H1 (cell line): ENCODE measurements at regions of chr17 and their contacts with region 1.

Region 1: GRCh38 chr17:35747540-35748017 is 5.5 kb downstream of the GAS2L2 start:
- DNase-seq: peak in 1 of 2 experiments; percentile 92
- H3K4me3 ChIP-seq: no peak overlapping the region
- H3K27ac ChIP-seq: no peak overlapping the region
- H3K4me1 ChIP-seq: peaks cover 0 to 11% (median 4%) of the 10 kb centered on the region in 4 experiments; a peak in 4 of 7 replicates
- H3K27me3 ChIP-seq: peaks cover 2 to 19% (median 15%) of the 10 kb centered on the region in 4 experiments
- CTCF ChIP-seq: peak; percentile 90 to 98 (median 95)
- EP300 ChIP-seq: no peak
- POLR2A ChIP-seq: no peak
- RAD21 ChIP-seq: peak; percentile 95 to 98

Region 2: GRCh38 chr17:35612924-35613521 is 134.6 kb before region 1 on chr17:
- CTCF ChIA-PET with region 1: interaction called, 166 read pairs
- POLR2A ChIA-PET with region 1: interaction called, 5 read pairs
- DNase-seq: peak in 1 of 2 experiments; percentile 55
- H3K4me3 ChIP-seq: no peak overlapping the region
- H3K27ac ChIP-seq: no peak overlapping the region
- H3K4me1 ChIP-seq: no peaks in the 10 kb centered on the region
- H3K27me3 ChIP-seq: no peaks in the 10 kb centered on the region
- CTCF ChIP-seq: peak in 2 of 3 experiments; percentile 50 to 69; a peak in 2 of 4 replicates
- EP300 ChIP-seq: no peak
- POLR2A ChIP-seq: no peak
- RAD21 ChIP-seq: peak; percentile 70

Region 3: GRCh38 chr17:35660902-35661301 is 86.7 kb before region 1 on chr17:
- CTCF ChIA-PET with region 1: interaction called, 18 read pairs
- POLR2A ChIA-PET with region 1: no interaction called
- DNase-seq: no peak
- H3K4me3 ChIP-seq: no peak overlapping the region
- H3K27ac ChIP-seq: no peak overlapping the region
- H3K4me1 ChIP-seq: peaks cover 0 to 3% (median 0%) of the 10 kb centered on the region in 4 experiments; a peak in 1 of 7 replicates
- H3K27me3 ChIP-seq: no peaks in the 10 kb centered on the region
- CTCF ChIP-seq: no peak
- EP300 ChIP-seq: no peak
- POLR2A ChIP-seq: no peak
- RAD21 ChIP-seq: peak in 1 of 2 experiments; percentile 16; a peak in 1 of 4 replicates

Region 4: DNA sequence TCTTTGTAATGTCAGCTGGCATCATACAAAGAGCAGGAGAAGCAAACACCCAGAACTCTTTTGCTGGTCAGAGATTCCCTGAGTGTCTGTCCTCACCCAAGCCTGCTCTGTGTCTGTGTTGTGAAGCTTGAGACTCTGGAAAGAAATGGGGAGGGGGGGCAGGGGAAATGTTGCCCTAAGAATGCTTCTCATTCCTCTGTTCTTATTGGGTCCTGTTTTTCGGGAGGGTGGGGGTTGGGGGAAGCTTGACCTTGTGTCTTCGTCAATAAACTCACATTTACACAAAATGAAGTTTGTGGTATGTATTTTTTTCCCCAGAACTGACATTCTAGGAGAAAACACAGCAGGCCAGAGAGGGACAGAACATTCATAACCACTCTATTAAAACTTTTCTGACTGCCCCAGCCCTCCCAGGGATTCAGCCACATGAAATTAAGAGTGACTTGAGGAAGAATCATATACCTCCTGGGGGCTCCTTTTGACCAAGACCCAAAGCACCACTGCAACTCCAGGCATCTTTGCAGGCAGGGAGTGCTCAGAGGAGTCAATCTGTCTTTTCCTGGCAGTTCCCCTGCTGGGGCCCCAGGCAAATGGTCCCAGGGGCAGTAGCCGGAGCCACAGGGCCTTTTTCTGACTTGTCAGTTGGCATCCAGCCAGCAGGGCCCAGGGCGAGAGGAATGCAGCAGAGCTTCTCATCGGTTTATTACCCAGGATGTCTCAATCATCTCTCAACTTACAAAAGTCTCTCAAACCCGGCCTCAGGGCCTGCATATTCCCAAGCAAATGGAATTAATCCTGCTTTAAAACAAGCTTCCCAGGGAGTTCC is 21.2 kb before region 1 on chr17:
- CTCF ChIA-PET with region 1: interaction called, 28 read pairs
- POLR2A ChIA-PET with region 1: interaction called, 3 read pairs
- DNase-seq: peak in 1 of 2 experiments; percentile 51
- H3K4me3 ChIP-seq: no peak overlapping the region
- H3K27ac ChIP-seq: no peak overlapping the region
- H3K4me1 ChIP-seq: peaks cover 3 to 22% (median 7%) of the 10 kb centered on the region in 4 experiments; a peak in 6 of 7 replicates
- H3K27me3 ChIP-seq: peaks cover 0 to 2% (median 1%) of the 10 kb centered on the region in 4 experiments; a peak in 3 of 7 replicates
- CTCF ChIP-seq: no peak
- EP300 ChIP-seq: no peak
- POLR2A ChIP-seq: no peak
- RAD21 ChIP-seq: no peak

Region 5: DNA sequence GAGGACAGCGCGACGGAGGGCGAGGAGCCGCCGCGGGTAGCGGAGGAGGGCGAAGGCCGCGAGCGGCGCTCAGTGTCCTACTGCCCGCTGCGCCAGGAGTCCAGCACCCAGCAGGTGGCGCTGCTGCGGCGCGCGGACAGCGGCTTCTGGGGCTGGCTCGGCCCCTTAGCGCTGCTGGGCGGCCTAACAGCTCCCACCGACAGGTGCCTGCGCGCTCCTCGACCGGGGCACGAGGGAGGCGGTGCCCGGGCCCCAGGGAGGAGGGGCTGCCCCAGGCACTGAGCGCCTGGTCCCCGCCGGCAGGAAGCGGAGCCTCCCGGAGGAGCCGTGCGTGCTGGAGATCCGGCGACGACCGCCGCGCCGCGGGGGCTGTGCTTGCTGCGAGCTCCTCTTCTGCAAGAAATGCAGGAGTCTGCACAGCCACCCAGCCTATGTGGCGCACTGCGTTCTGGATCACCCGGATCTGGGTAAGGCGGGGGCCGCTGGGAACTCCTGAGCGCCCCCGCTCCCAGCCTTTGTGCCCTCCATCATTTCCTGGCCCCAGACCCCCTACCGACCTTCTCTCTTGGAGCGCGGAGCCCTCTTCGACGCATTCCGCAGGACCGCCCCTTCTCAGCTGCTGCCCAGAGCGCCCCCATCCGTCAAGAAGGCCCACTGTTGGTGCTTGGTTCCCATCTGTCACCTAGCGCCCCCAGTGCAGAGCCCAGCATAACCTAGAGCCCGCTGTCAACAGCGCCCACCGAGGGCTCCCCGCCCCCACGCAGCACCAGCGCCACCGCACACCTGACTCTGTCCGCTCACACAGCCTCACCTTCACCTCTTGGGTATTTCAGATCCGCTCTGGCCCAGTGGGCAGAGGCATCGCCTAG is 16.8 kb after region 1 on chr17:
- CTCF ChIA-PET with region 1: interaction called, 83 read pairs
- POLR2A ChIA-PET with region 1: interaction called, 6 read pairs
- DNase-seq: peak; percentile 90 to 96
- H3K4me3 ChIP-seq: peak overlapping the region; percentile 16 to 62 (median 50); a peak in 7 of 8 replicates
- H3K27ac ChIP-seq: no peak overlapping the region
- H3K4me1 ChIP-seq: peaks cover 0 to 12% (median 7%) of the 10 kb centered on the region in 4 experiments; a peak in 5 of 7 replicates
- H3K27me3 ChIP-seq: peaks cover 0 to 3% (median 2%) of the 10 kb centered on the region in 4 experiments; a peak in 3 of 7 replicates
- CTCF ChIP-seq: peak; percentile 96 to 99 (median 97)
- EP300 ChIP-seq: peak in 1 of 2 experiments; percentile 59; a peak in 1 of 3 replicates
- POLR2A ChIP-seq: peak in 1 of 2 experiments; percentile 34; a peak in 1 of 3 replicates
- RAD21 ChIP-seq: peak; percentile 75 to 86

Region 6: GRCh38 chr17:35808962-35809854 is 61.6 kb after region 1 on chr17 and contains the start of gene TAF15:
- CTCF ChIA-PET with region 1: interaction called, 11 read pairs
- POLR2A ChIA-PET with region 1: interaction called, 6 read pairs
- DNase-seq: peak; percentile 89 to 94
- H3K4me3 ChIP-seq: peak within 1 kb of the TSS; percentile 91 to 98 (median 94)
- H3K27ac ChIP-seq: peak within 1 kb of the TSS; percentile 99
- H3K4me1 ChIP-seq: peaks cover 0 to 10% (median 0%) of the 10 kb centered on the region in 4 experiments; a peak in 3 of 7 replicates
- H3K27me3 ChIP-seq: no peaks in the 10 kb centered on the region
- CTCF ChIP-seq: peak; percentile 67 to 76 (median 72)
- EP300 ChIP-seq: peak in 1 of 2 experiments; percentile 100; a peak in 2 of 3 replicates
- POLR2A ChIP-seq: peak; percentile 97 to 99
- RAD21 ChIP-seq: peak; percentile 50 to 52; a peak in 3 of 4 replicates
- total RNA-seq, gene TAF15: 323 and 338 TPM in 2 replicates